ENCODE measurements at regions of chr19 and their contacts with region 1.

Region 1: GRCh38 chr19:18281082-18282020 is at the start of gene JUND:
- DNase-seq: peak; percentile 98
- ATAC-seq: peak; percentile 81
- H3K4me3 ChIP-seq: peak within 1 kb of the TSS; percentile 95
- H3K27ac ChIP-seq: peak within 1 kb of the TSS; percentile 100
- H3K4me1 ChIP-seq: peaks cover 14% of the 10 kb centered on the region
- H3K27me3 ChIP-seq: no peaks in the 10 kb centered on the region
- CTCF ChIP-seq: 0 out of 2 replicates have a peak, but pooled peaks have one; percentile 17
- POLR2A ChIP-seq: peak; percentile 98
- RAD21 ChIP-seq: no peak
- total RNA-seq, gene JUND: 14.2 and 22.8 TPM in 2 replicates

Region 2: GRCh38 chr19:17215125-17215971 is 1066.0 kb before region 1 on chr19 and contains the start of gene USE1:
- CTCF ChIA-PET with region 1: no interaction called
- POLR2A ChIA-PET with region 1: interaction called, 14 read pairs
- dilution Hi-C with region 1: no loop called
- in situ Hi-C with region 1: no loop called
- intact Hi-C with region 1: no loop called
- DNase-seq: peak; percentile 86
- ATAC-seq: peak; percentile 94
- H3K4me3 ChIP-seq: peak within 1 kb of the TSS; percentile 65
- H3K27ac ChIP-seq: peak within 1 kb of the TSS; percentile 92
- H3K4me1 ChIP-seq: peaks cover 12% of the 10 kb centered on the region
- H3K27me3 ChIP-seq: no peaks in the 10 kb centered on the region
- CTCF ChIP-seq: no peak
- POLR2A ChIP-seq: peak; percentile 89
- RAD21 ChIP-seq: no peak
- total RNA-seq, gene USE1: 17.2 and 18.1 TPM in 2 replicates

Region 3: GRCh38 chr19:18044825-18045304 is 236.5 kb before region 1 on chr19:
- CTCF ChIA-PET with region 1: no interaction called
- POLR2A ChIA-PET with region 1: no interaction called
- dilution Hi-C with region 1: no loop called
- in situ Hi-C with region 1: no loop called
- intact Hi-C with region 1: no loop called
- DNase-seq: peak; percentile 76
- ATAC-seq: peak; percentile 67
- H3K4me3 ChIP-seq: peak overlapping the region; percentile 15
- H3K27ac ChIP-seq: peak overlapping the region; percentile 21
- H3K4me1 ChIP-seq: peaks cover 8% of the 10 kb centered on the region
- H3K27me3 ChIP-seq: peaks cover 5% of the 10 kb centered on the region; the same call in 1 of the 2 replicates
- CTCF ChIP-seq: no peak
- POLR2A ChIP-seq: no peak
- RAD21 ChIP-seq: no peak

Region 4: GRCh38 chr19:18291590-18292461 is 10.5 kb after region 1 on chr19:
- CTCF ChIA-PET with region 1: interaction called, 23 read pairs
- POLR2A ChIA-PET with region 1: interaction called, 17 read pairs
- dilution Hi-C with region 1: no loop called
- in situ Hi-C with region 1: no loop called
- intact Hi-C with region 1: loop called (anchors 1 kb)
- DNase-seq: peak; percentile 75
- ATAC-seq: peak; percentile 76
- H3K4me3 ChIP-seq: peak overlapping the region; percentile 49
- H3K27ac ChIP-seq: peak overlapping the region; percentile 92
- H3K4me1 ChIP-seq: peaks cover 23% of the 10 kb centered on the region
- H3K27me3 ChIP-seq: no peaks in the 10 kb centered on the region
- CTCF ChIP-seq: no peak
- POLR2A ChIP-seq: peak; percentile 64
- RAD21 ChIP-seq: no peak

Region 5: DNA sequence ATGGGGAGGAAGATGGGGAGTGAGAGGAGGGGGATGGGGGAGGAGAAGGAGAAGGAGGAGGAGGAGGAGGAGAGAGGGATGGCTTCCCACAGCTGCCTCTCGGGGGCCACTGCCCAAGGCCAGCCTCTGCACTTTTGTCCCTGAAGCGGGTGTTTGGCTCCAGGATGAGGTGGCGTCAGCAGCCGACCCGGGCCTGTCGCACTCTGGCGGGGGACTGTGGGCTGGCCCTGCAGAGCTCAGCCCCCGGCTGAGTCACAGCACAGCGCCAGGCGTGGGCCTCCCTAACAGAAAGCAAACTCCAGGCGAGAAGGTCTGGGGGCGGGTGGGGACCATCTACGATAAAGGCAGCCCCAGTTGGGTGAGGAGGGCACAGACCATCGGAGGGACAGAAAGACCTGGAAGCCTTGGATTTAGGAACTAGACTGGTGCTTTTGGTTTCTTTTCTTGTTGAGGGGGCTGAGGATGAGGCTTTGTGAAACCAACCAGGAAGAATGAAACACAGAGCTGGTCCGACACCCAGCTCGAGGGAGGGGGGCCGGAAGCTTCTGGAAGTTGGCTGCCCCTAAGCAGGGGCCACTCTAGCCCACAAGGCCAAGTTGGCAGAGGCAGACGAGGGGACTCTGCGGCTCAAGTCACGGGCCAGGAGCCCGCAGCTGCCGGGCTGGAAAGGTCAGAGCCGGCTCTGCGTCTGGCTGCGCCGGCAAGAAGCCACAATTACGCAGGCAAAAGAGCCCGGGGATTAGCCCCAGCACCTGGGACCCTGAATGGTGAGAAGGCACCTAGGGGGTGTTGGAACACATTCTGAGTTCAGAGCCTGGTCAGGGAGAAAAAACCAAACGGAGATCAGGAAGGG is 23.3 kb after region 1 on chr19:
- CTCF ChIA-PET with region 1: interaction called, 15 read pairs
- POLR2A ChIA-PET with region 1: interaction called, 30 read pairs
- dilution Hi-C with region 1: no loop called
- in situ Hi-C with region 1: no loop called
- intact Hi-C with region 1: loop called (anchors 1 kb)
- DNase-seq: peak; percentile 83
- ATAC-seq: peak; percentile 86
- H3K4me3 ChIP-seq: peak overlapping the region; percentile 40
- H3K27ac ChIP-seq: peak overlapping the region; percentile 97
- H3K4me1 ChIP-seq: peaks cover 22% of the 10 kb centered on the region
- H3K27me3 ChIP-seq: no peaks in the 10 kb centered on the region
- CTCF ChIP-seq: no peak
- POLR2A ChIP-seq: peak; percentile 88
- RAD21 ChIP-seq: no peak; the same call in none of the 2 replicates

Region 6: DNA sequence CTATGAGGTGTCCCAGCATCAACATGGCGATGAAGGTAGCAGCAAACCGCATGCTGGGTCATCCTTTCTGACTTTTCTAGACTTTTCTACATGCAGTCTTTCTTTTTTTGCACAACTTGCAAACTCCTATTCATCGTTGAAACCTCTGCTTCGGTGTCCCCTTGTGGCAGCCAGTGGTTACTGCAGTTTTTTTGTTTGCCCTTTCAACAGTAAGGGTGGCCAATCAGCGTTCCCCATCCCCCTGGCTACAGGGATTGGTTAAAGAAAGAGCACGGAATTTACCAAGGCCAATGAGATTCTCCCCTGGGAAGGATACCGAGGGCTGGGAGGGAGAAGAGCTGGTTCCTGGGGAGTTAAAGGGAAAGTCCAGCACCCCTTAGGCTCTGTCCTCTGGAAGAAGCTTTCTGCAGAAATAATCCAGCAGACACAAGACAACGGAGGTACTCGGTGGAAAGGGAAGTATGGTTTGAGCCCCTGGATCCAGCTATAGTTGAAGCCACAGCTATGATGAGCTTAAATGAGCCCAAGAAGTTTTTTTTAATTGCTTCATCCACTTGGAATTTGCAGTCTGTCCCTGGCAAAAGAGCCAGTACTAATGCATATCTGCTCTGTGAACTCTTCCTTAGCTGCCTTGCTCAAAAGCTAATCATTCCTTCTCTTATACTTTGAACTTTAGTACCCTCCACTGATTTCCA is 47.1 kb after region 1 on chr19:
- CTCF ChIA-PET with region 1: interaction called, 39 read pairs
- POLR2A ChIA-PET with region 1: interaction called, 16 read pairs
- dilution Hi-C with region 1: no loop called
- in situ Hi-C with region 1: loop called (anchors 5 kb)
- intact Hi-C with region 1: loop called (anchors 1 kb)
- DNase-seq: peak; percentile 97
- ATAC-seq: peak; percentile 100
- H3K4me3 ChIP-seq: peak overlapping the region; percentile 35
- H3K27ac ChIP-seq: peak overlapping the region; percentile 85
- H3K4me1 ChIP-seq: peaks cover 3% of the 10 kb centered on the region
- H3K27me3 ChIP-seq: no peaks in the 10 kb centered on the region; the same call in 1 of the 2 replicates
- CTCF ChIP-seq: peak; percentile 99
- POLR2A ChIP-seq: no peak
- RAD21 ChIP-seq: peak; percentile 87

Region 7: GRCh38 chr19:18419195-18419698 is 137.9 kb after region 1 on chr19 and contains the start of gene SSBP4:
- CTCF ChIA-PET with region 1: interaction called, 5 read pairs
- POLR2A ChIA-PET with region 1: interaction called, 4 read pairs
- dilution Hi-C with region 1: no loop called
- in situ Hi-C with region 1: no loop called
- intact Hi-C with region 1: loop called (anchors 5 kb)
- DNase-seq: peak; percentile 70
- ATAC-seq: peak; percentile 38
- H3K4me3 ChIP-seq: peak within 1 kb of the TSS; percentile 68
- H3K27ac ChIP-seq: peak within 1 kb of the TSS; percentile 90
- H3K4me1 ChIP-seq: peaks cover 37% of the 10 kb centered on the region
- H3K27me3 ChIP-seq: no peaks in the 10 kb centered on the region
- CTCF ChIP-seq: peak; percentile 50
- POLR2A ChIP-seq: peak; percentile 38
- RAD21 ChIP-seq: peak; percentile 24
- total RNA-seq, gene SSBP4: 13.3 and 14.9 TPM in 2 replicates